Psoas muscle (tissue), 8 donors: ENCODE measurements at regions of chr3 and their contacts with region 1.

Region 1: GRCh38 chr3:187745201-187746058 is at the start of gene BCL6:
- DNase-seq: peak; percentile 92 to 96
- ATAC-seq: peak; percentile 61 to 70 (median 64)
- H3K4me3 ChIP-seq: peak within 1 kb of the TSS; percentile 93
- H3K27ac ChIP-seq: peak within 1 kb of the TSS; percentile 100
- H3K4me1 ChIP-seq: peaks cover 24% of the 10 kb centered on the region
- H3K27me3 ChIP-seq: no peaks in the 10 kb centered on the region
- CTCF ChIP-seq: no peak
- total RNA-seq, gene BCL6: 235 to 524 (median 312) TPM

Region 2: DNA sequence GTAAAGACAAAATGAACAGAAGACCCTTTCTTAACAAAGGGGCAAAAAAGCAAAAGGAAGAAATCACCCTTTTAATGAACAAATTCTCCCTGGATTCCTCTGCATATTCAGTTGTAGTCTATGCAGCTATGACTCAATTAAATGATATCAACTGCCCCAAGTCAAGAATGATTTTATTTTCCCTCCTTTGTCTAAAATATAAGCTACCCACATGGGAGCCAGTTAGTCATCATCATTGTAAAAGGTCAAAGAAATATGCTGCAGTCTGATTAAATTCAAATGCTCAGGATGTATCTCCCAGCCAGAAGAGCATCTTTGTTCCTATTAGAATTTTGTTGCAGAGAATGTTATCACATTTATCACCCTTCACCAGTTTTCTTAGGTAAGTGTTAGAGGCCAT is 159.2 kb before region 1 on chr3:
- intact Hi-C with region 1: no loop called
- DNase-seq: no peak
- ATAC-seq: no peak
- H3K4me3 ChIP-seq: no peak overlapping the region
- H3K27ac ChIP-seq: no peak overlapping the region
- H3K4me1 ChIP-seq: no peaks in the 10 kb centered on the region
- H3K27me3 ChIP-seq: peaks cover 0 to 5% (median 0%) of the 10 kb centered on the region in 3 donors
- CTCF ChIP-seq: no peak

Region 3: GRCh38 chr3:187628169-187628568 is 117.3 kb before region 1 on chr3:
- intact Hi-C with region 1: no loop called
- DNase-seq: no peak
- ATAC-seq: no peak
- H3K4me3 ChIP-seq: no peak overlapping the region
- H3K27ac ChIP-seq: no peak overlapping the region
- H3K4me1 ChIP-seq: peaks cover 11% of the 10 kb centered on the region
- H3K27me3 ChIP-seq: no peaks in the 10 kb centered on the region
- CTCF ChIP-seq: no peak

Region 4: DNA sequence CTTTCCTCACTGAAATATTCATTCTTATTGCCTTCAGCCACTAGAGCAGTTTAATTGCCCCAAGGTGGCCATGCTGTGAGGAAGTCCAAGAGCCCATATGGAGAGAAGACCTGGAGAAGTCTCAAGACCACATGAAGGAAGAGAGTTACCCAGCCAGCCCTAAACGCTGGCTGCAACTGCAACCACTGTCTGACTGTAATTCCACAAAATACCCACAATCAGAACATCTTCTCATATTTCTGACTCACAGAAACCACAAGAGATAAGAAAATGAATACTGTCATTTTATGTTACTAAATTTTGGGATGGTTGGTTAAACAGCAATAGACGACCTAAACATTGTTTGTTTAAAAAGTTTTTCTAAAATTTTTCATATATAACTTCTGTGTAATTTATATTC is 60.5 kb before region 1 on chr3:
- intact Hi-C with region 1: no loop called
- DNase-seq: no peak
- ATAC-seq: no peak
- H3K4me3 ChIP-seq: no peak overlapping the region
- H3K27ac ChIP-seq: no peak overlapping the region
- H3K4me1 ChIP-seq: no peaks in the 10 kb centered on the region
- H3K27me3 ChIP-seq: peaks cover 0 to 4% (median 2%) of the 10 kb centered on the region in 3 donors
- CTCF ChIP-seq: no peak

Region 5: GRCh38 chr3:187913617-187914291 is 168.3 kb after region 1 on chr3:
- intact Hi-C with region 1: loop called (anchors 5 kb)
- DNase-seq: no peak
- ATAC-seq: peak in 1 of 4 donors; percentile 15
- H3K4me3 ChIP-seq: no peak overlapping the region
- H3K27ac ChIP-seq: peak overlapping the region; percentile 83
- H3K4me1 ChIP-seq: peaks cover 55% of the 10 kb centered on the region
- H3K27me3 ChIP-seq: no peaks in the 10 kb centered on the region
- CTCF ChIP-seq: no peak

Region 6: GRCh38 chr3:187946163-187946691 is 200.8 kb after region 1 on chr3:
- intact Hi-C with region 1: loop called in 1 of 2 experiments (anchors 5 kb)
- DNase-seq: no peak
- ATAC-seq: no peak
- H3K4me3 ChIP-seq: no peak overlapping the region
- H3K27ac ChIP-seq: peak overlapping the region; percentile 32
- H3K4me1 ChIP-seq: peaks cover 48% of the 10 kb centered on the region
- H3K27me3 ChIP-seq: no peaks in the 10 kb centered on the region
- CTCF ChIP-seq: no peak

Region 7: DNA sequence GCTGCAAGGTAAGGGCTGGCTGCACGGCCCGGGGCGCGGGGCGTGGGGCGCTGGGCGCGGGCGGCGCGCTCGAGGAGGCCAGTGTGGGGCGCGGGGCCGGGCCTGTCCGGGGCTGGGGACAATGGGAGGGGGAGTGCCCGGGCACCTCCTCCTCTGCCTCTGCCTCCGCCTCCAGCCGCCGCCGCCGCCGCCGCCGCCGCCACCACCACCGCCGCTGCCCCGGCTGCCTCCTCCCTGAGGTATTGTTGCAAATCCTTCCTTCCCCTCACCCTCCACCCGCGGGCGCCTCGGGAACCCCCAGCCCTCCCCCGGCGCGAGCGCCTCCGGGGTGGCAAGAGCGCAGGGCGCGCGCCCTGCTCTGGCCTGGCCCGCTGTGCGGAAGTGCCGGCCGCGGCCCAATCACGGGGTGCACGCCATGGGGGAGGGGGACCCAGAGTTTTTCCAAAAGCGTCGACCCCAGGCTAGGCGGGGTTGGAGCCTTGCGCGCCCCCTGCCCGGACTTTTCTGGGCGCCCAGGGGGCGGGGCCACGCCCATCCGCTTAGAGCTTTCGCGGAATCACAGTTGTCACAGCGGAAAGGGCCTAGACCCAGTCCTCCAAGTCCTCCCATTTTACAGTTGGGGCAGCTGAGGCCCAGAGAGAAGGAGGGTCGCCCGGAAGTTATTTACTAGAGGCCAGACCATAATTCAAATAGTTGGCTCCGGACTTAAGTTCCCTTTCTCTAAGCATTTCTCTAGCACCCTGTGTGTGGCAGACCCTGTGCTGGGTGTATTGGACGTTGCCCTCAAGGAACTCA is 408.8 kb after region 1 on chr3 and contains the start of gene LPP:
- intact Hi-C with region 1: loop called (anchors 2 to 5 kb)
- DNase-seq: peak; percentile 81 to 90
- ATAC-seq: peak; percentile 78 to 83 (median 80)
- H3K4me3 ChIP-seq: peak within 1 kb of the TSS; percentile 80
- H3K27ac ChIP-seq: peak within 1 kb of the TSS; percentile 91
- H3K4me1 ChIP-seq: peaks cover 30% of the 10 kb centered on the region
- H3K27me3 ChIP-seq: no peaks in the 10 kb centered on the region
- CTCF ChIP-seq: no peak
- total RNA-seq, gene LPP: 42.8 to 80.3 (median 58.3) TPM

Region 8: DNA sequence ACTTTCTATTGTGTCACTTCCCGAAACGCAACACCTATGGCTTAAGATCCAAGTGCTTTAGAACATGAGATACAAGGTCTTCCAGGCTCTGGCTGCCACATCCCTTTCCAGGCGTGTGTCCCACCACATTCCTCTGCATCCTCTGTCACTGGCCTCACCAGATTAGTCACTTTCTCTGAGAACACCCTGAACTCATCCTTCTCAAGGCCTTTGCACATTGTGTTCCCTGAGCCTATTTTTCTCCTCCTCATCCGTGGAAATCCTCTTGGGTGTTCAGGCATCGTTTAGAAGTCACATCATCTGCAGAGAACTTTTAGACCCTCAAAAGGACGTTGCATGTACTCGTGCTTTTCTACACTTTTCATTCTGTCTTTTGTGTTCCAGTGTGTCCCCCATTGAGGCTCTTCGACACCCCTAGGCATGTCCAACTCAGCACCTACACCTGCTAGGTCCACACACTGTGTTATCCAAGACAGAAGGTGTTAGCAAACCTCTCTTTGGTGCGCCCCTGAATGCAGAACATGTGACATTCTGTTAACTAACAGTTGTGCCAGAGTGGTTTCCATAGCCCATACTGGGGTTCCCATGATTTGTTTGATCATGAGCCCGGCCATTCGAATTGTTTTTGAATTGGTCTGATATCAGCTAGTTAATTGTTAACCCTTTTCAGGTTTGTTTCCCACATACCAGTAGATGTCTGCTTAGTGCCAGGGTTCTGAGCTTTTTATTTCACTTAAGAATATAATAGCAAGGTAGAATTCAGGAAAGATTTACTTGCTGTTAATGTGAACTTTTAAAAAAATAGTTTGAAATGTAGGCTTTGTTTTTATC is 475.8 kb after region 1 on chr3:
- intact Hi-C with region 1: loop called in 1 of 2 experiments (anchors 2 kb)
- DNase-seq: peak; percentile 80 to 92
- ATAC-seq: peak; percentile 94 to 98 (median 96)
- H3K4me3 ChIP-seq: no peak overlapping the region
- H3K27ac ChIP-seq: peak overlapping the region; percentile 87
- H3K4me1 ChIP-seq: peaks cover 63% of the 10 kb centered on the region
- H3K27me3 ChIP-seq: no peaks in the 10 kb centered on the region
- CTCF ChIP-seq: no peak

Region 9: GRCh38 chr3:188780193-188781147 is 1035.0 kb after region 1 on chr3:
- intact Hi-C with region 1: no loop called
- DNase-seq: peak; percentile 29 to 52
- ATAC-seq: peak; percentile 73 to 94 (median 86)
- H3K4me3 ChIP-seq: no peak overlapping the region
- H3K27ac ChIP-seq: peak overlapping the region; percentile 59
- H3K4me1 ChIP-seq: peaks cover 20% of the 10 kb centered on the region
- H3K27me3 ChIP-seq: no peaks in the 10 kb centered on the region
- CTCF ChIP-seq: no peak